Sigmoid colon (tissue), 7 donors: ENCODE measurements at regions of chr1 and their contacts with region 1.

Region 1: GRCh38 chr1:96487394-96487793 is 234.2 kb upstream of the PTBP2 start:
- DNase-seq: no peak
- H3K4me3 ChIP-seq: peak overlapping the region in 2 of 4 donors; percentile 2 to 7
- H3K27ac ChIP-seq: peak overlapping the region in 3 of 4 donors; percentile 76 to 81 (median 79)
- H3K4me1 ChIP-seq: peaks cover 0 to 54% (median 32%) of the 10 kb centered on the region in 4 donors
- H3K27me3 ChIP-seq: no peaks in the 10 kb centered on the region
- CTCF ChIP-seq: no peak
- EP300 ChIP-seq: no peak
- POLR2A ChIP-seq: no peak

Region 2: GRCh38 chr1:96313216-96313615 is 174.2 kb before region 1 on chr1:
- intact Hi-C with region 1: no loop called
- DNase-seq: no peak
- H3K4me3 ChIP-seq: no peak overlapping the region
- H3K27ac ChIP-seq: no peak overlapping the region
- H3K4me1 ChIP-seq: no peaks in the 10 kb centered on the region
- H3K27me3 ChIP-seq: no peaks in the 10 kb centered on the region
- CTCF ChIP-seq: no peak
- EP300 ChIP-seq: no peak
- POLR2A ChIP-seq: no peak

Region 3: GRCh38 chr1:96515430-96515829 is 28.0 kb after region 1 on chr1:
- intact Hi-C with region 1: loop called (anchors 5 kb)
- DNase-seq: no peak
- H3K4me3 ChIP-seq: no peak overlapping the region
- H3K27ac ChIP-seq: no peak overlapping the region
- H3K4me1 ChIP-seq: peaks cover 0 to 46% (median 32%) of the 10 kb centered on the region in 4 donors
- H3K27me3 ChIP-seq: no peaks in the 10 kb centered on the region
- CTCF ChIP-seq: no peak
- EP300 ChIP-seq: no peak
- POLR2A ChIP-seq: no peak

Region 4: DNA sequence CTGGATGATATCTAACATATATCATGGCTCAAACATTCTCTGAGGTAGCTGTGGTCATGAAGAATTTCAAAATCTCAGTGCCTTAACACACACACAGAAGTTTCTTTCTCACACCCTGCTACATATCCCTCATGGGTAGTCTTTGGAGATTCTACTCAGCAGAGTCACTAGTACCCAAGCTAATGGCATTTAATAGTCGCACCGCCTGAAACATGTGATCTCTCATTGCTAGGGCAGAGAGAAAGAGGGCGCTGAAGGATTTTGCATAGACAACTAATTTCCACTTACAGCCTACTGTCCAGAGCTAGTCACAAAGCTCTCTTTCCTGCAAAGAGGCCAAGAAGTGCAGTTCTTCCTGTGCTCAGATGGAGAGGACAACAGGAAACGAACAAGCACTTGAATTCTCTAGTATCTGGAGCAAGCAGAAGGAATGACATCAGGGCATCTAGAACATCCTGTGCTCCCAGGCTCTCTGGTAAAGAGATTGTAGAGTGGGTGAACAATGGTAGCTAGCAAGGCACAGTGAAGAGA is 50.8 kb after region 1 on chr1:
- intact Hi-C with region 1: loop called (anchors 5 kb)
- DNase-seq: peak; percentile 86
- H3K4me3 ChIP-seq: no peak overlapping the region
- H3K27ac ChIP-seq: peak overlapping the region; percentile 80 to 86 (median 82)
- H3K4me1 ChIP-seq: peaks cover 0 to 56% (median 43%) of the 10 kb centered on the region in 4 donors
- H3K27me3 ChIP-seq: no peaks in the 10 kb centered on the region
- CTCF ChIP-seq: peak in 1 of 4 experiments; percentile 16
- EP300 ChIP-seq: peak; percentile 69 to 96 (median 86)
- POLR2A ChIP-seq: no peak

Region 5: DNA sequence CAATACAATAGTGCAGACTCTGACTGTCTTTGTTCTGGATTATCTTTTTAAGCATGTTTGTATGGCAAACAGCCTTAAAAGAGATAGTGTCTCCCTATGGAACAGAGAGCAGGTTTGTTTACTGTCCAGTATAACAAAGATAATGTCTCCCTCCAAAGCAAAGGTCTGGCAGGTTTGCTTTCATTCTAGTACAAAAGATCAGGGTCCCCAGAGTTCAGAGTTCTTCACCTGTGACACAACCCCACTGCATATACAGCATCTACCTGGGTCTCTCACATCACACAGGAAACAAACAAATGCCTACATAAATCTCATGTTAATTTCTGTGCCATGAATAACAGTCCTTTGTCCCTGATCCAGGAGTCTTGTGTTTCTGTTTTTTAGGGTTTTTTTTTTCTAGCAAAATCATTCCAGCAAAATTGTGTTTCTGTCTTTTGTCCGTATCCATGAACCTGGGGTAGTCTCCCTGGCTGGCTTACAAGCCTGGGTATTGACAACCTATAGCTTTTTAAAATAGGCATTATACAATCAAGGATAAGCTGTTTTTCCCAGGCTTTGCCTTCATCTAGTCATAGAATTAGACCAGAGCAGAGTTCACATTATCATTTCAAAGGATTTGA is 144.8 kb after region 1 on chr1:
- intact Hi-C with region 1: no loop called
- DNase-seq: no peak
- H3K4me3 ChIP-seq: no peak overlapping the region
- H3K27ac ChIP-seq: no peak overlapping the region
- H3K4me1 ChIP-seq: no peaks in the 10 kb centered on the region
- H3K27me3 ChIP-seq: no peaks in the 10 kb centered on the region
- CTCF ChIP-seq: no peak
- EP300 ChIP-seq: no peak
- POLR2A ChIP-seq: no peak

Region 6: DNA sequence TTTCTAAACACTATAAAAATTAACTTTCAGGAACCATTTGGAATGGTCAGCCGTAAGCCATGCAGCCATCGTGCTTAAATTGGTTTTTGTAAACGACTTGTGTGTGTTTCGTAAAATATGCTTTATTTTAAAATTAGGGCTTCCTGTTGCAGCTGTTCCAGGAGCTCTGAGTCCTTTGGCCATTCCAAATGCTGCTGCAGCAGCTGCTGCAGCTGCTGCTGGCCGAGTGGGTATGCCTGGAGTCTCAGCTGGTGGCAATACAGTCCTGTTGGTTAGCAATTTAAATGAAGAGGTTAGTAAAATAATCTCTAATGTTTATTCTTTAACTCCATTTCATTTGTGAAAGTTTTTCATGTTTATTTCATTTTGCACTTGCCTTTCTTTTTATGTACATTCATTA is 317.3 kb after region 1 on chr1:
- intact Hi-C with region 1: no loop called
- DNase-seq: no peak
- H3K4me3 ChIP-seq: no peak overlapping the region
- H3K27ac ChIP-seq: no peak overlapping the region
- H3K4me1 ChIP-seq: peaks cover 0 to 33% (median 8%) of the 10 kb centered on the region in 4 donors
- H3K27me3 ChIP-seq: no peaks in the 10 kb centered on the region
- CTCF ChIP-seq: no peak
- EP300 ChIP-seq: no peak
- POLR2A ChIP-seq: no peak